ENCODE measurements at regions of chr11 and their contacts with region 1.

Region 1: DNA sequence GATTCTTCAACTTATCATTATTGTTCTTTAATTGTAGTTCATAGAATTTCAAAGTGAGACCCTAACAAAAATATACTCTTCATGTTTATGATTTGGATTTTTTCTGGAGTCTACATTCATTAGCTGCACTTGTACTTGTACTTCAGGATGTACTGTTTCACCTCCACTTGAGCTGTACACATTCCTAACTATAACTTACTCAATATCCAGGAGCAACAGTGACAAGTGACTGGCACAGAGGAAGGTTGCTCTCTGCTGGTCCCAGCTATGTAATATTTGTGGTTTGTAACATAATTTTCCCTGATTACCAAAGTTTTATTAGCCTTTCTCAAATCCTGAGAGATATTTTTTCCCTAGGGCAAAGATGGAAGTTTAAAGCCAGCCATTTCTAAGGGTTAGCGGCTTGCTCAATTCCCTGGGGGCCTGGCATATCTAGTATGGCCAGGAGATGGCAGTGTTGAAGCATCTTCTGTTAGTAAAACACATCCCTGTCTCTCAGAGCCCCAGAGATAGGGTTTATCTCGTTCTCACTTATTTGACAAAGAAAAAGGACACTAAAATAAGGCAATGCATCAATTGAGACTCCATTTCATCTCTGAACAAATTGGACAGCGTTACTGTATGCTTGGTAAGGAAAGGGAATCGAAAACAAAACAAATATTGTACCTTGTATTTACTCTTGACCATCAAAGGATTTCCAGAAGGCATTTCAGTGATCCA is 14.2 kb downstream of the OR52A5 start:
- DNase-seq: peak; percentile 13
- ATAC-seq: peak; percentile 90
- H3K4me3 ChIP-seq: no peak overlapping the region
- H3K27ac ChIP-seq: no peak overlapping the region
- H3K4me1 ChIP-seq: no peaks in the 10 kb centered on the region
- H3K27me3 ChIP-seq: no peaks in the 10 kb centered on the region
- CTCF ChIP-seq: peak; percentile 73 to 82 (median 77)
- EP300 ChIP-seq: no peak
- POLR2A ChIP-seq: no peak
- RAD21 ChIP-seq: peak; percentile 69

Region 2: GRCh38 chr11:5204787-5205186 is 80.8 kb after region 1 on chr11:
- CTCF ChIA-PET with region 1: interaction called, 3 read pairs
- POLR2A ChIA-PET with region 1: no interaction called
- RAD21 ChIA-PET with region 1: no interaction called
- SMC1A ChIA-PET with region 1: no interaction called
- in situ Hi-C with region 1: no loop called
- intact Hi-C with region 1: loop called (anchors 5 kb)
- DNase-seq: no peak
- ATAC-seq: peak; percentile 87
- H3K4me3 ChIP-seq: no peak overlapping the region
- H3K27ac ChIP-seq: no peak overlapping the region
- H3K4me1 ChIP-seq: no peaks in the 10 kb centered on the region
- H3K27me3 ChIP-seq: no peaks in the 10 kb centered on the region
- CTCF ChIP-seq: peak; percentile 34 to 60 (median 40); a peak in 4 of 6 replicates
- EP300 ChIP-seq: no peak
- POLR2A ChIP-seq: no peak
- RAD21 ChIP-seq: peak; percentile 63

Region 3: DNA sequence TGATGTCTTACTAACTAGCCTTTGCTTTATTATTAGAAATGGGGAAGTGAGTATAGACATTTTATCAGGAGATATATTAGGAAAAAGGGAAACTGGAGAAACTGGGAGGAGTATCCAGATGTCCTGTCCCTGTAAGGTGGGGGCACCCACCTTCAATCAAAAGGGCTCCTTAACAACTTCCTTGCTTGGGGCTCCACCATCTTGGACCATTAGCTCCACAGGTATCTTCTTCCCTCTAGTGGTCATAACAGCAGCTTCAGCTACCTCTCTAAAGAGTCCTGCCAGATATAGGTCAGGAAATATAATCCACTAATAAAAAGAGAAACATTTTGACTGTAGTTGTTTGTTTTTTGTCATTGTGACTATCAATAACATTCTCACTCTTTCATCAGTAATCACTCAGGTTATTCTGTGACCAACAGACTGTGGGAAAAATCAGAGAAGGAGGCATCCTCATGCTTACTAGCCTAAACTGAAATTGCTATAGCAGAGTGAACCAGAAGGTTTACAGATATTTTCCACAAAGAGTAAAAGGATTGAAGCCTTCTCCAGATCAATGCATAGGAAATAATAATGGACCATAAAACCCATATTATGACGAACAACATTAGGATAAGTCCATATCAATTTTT is 167.4 kb after region 1 on chr11:
- CTCF ChIA-PET with region 1: interaction called, 10 read pairs
- POLR2A ChIA-PET with region 1: no interaction called
- RAD21 ChIA-PET with region 1: no interaction called
- SMC1A ChIA-PET with region 1: interaction called, 3 read pairs
- in situ Hi-C with region 1: no loop called
- intact Hi-C with region 1: loop called (anchors 1 kb)
- DNase-seq: no peak
- ATAC-seq: peak; percentile 97
- H3K4me3 ChIP-seq: no peak overlapping the region
- H3K27ac ChIP-seq: no peak overlapping the region
- H3K4me1 ChIP-seq: no peaks in the 10 kb centered on the region
- H3K27me3 ChIP-seq: no peaks in the 10 kb centered on the region
- CTCF ChIP-seq: peak; percentile 48 to 57 (median 56)
- EP300 ChIP-seq: no peak
- POLR2A ChIP-seq: no peak
- RAD21 ChIP-seq: peak; percentile 62

Region 4: DNA sequence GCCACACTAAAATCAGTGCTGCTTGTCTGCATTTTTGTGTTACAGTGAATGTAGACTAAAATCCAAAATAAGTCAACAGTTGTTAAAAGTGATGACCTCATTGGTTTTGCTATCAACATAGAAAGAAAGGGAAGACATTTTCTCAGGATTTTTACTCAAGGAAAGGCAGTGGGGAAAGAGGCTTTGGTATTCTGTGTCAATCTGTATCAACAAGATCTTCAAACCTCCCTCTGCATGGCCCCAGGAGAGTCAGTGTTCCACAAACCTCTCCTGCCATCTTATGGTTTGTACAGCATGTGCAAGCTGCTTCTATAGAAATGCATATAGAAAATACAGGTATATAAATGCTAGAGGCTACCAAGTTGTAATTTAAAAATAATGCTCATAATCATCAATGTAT is 245.8 kb after region 1 on chr11:
- CTCF ChIA-PET with region 1: interaction called, 11 read pairs
- POLR2A ChIA-PET with region 1: no interaction called
- RAD21 ChIA-PET with region 1: interaction called, 4 read pairs
- SMC1A ChIA-PET with region 1: interaction called, 3 read pairs
- in situ Hi-C with region 1: no loop called
- intact Hi-C with region 1: no loop called
- DNase-seq: no peak
- ATAC-seq: peak; percentile 83
- H3K4me3 ChIP-seq: no peak overlapping the region
- H3K27ac ChIP-seq: no peak overlapping the region
- H3K4me1 ChIP-seq: no peaks in the 10 kb centered on the region
- H3K27me3 ChIP-seq: no peaks in the 10 kb centered on the region
- CTCF ChIP-seq: peak in 2 of 3 experiments; percentile 22 to 61; a peak in 3 of 6 replicates
- EP300 ChIP-seq: no peak
- POLR2A ChIP-seq: no peak
- RAD21 ChIP-seq: peak; percentile 29

Region 5: DNA sequence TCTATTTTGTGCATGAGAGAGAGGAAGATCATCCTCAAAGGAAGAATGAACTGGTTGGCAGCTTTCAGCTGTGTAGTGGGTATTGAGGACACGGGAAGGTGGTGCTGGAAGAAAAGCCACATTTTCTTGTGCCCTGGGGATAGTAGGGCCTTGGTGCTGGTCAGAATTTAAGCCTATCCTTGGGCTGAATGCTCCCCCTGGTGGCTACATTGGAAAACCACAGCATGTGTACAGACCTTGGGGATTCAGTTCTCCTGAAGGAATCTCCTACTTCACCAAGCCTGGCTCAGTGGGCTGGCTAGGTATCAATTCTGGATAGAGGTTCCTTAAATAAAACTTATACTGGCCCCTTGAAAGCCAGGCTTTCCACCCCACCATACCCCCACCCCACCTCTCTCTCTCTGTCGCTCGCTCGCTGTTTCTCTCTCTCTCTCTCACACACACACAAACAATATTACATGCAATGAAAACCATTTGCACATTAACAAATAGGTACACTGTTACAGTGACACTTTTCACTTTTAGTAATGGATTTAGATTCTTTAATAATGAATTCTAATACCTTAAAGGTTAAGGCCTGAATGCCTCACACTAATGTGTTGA is 256.9 kb after region 1 on chr11:
- CTCF ChIA-PET with region 1: interaction called, 5 read pairs
- POLR2A ChIA-PET with region 1: no interaction called
- RAD21 ChIA-PET with region 1: interaction called, 3 read pairs
- SMC1A ChIA-PET with region 1: interaction called, 3 read pairs
- in situ Hi-C with region 1: loop called (anchors 5 kb)
- intact Hi-C with region 1: loop called (anchors 1 kb)
- DNase-seq: no peak
- ATAC-seq: peak; percentile 98
- H3K4me3 ChIP-seq: no peak overlapping the region
- H3K27ac ChIP-seq: no peak overlapping the region
- H3K4me1 ChIP-seq: no peaks in the 10 kb centered on the region
- H3K27me3 ChIP-seq: no peaks in the 10 kb centered on the region
- CTCF ChIP-seq: peak; percentile 71 to 83 (median 80)
- EP300 ChIP-seq: no peak
- POLR2A ChIP-seq: no peak
- RAD21 ChIP-seq: peak; percentile 83

Region 6: DNA sequence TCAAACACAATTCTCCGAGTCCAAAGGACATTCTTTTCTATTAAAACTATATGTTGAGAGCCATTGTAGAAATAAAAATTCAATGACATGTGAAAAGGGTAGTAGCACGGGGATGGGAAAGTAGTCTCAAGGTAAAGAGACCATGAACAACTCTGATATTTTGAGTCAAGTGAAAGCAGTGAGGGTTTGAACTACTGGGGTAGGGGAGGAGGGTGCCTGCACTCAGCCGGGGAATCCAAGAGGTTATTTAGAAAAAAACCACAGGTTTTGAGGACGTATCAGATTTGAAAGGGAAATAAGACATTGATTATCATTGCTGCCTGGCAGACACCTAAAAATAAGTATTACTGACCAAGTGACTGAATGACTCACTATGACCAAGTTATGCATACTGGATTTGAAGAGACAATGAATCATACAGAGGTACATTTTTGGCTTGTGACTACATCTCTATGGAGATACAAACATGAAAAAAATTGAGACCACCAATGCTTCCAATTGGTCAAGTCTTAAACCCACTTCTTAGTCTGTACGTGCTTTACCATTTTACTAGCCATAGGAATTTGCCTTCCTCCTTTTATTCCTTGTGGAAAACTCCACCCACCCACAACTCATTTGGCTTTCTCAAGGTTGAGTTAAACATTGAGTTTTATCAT is 426.6 kb after region 1 on chr11:
- CTCF ChIA-PET with region 1: interaction called, 3 read pairs
- POLR2A ChIA-PET with region 1: no interaction called
- RAD21 ChIA-PET with region 1: no interaction called
- SMC1A ChIA-PET with region 1: interaction called, 3 read pairs
- in situ Hi-C with region 1: no loop called
- intact Hi-C with region 1: loop called (anchors 10 kb)
- DNase-seq: peak; percentile 8
- ATAC-seq: peak; percentile 78
- H3K4me3 ChIP-seq: no peak overlapping the region
- H3K27ac ChIP-seq: no peak overlapping the region
- H3K4me1 ChIP-seq: no peaks in the 10 kb centered on the region
- H3K27me3 ChIP-seq: no peaks in the 10 kb centered on the region
- CTCF ChIP-seq: no peak
- EP300 ChIP-seq: peak in 1 of 2 experiments; percentile 27; a peak in 1 of 4 replicates
- POLR2A ChIP-seq: no peak
- RAD21 ChIP-seq: no peak

Region 7: GRCh38 chr11:5891216-5891800 is 767.3 kb after region 1 on chr11:
- CTCF ChIA-PET with region 1: no interaction called
- POLR2A ChIA-PET with region 1: no interaction called
- RAD21 ChIA-PET with region 1: no interaction called
- SMC1A ChIA-PET with region 1: no interaction called
- in situ Hi-C with region 1: no loop called
- intact Hi-C with region 1: loop called (anchors 5 kb)
- DNase-seq: peak; percentile 0
- ATAC-seq: no peak; the same call in 2 of the 3 replicates
- H3K4me3 ChIP-seq: no peak overlapping the region
- H3K27ac ChIP-seq: no peak overlapping the region
- H3K4me1 ChIP-seq: no peaks in the 10 kb centered on the region
- H3K27me3 ChIP-seq: no peaks in the 10 kb centered on the region
- CTCF ChIP-seq: peak; percentile 8 to 38 (median 22); a peak in 4 of 6 replicates
- EP300 ChIP-seq: no peak
- POLR2A ChIP-seq: no peak
- RAD21 ChIP-seq: peak; percentile 53

Measured in GM12878 (cell line).